ACHN (cell line): ENCODE measurements at regions of chr5 and their contacts with region 1.

Region 1: DNA sequence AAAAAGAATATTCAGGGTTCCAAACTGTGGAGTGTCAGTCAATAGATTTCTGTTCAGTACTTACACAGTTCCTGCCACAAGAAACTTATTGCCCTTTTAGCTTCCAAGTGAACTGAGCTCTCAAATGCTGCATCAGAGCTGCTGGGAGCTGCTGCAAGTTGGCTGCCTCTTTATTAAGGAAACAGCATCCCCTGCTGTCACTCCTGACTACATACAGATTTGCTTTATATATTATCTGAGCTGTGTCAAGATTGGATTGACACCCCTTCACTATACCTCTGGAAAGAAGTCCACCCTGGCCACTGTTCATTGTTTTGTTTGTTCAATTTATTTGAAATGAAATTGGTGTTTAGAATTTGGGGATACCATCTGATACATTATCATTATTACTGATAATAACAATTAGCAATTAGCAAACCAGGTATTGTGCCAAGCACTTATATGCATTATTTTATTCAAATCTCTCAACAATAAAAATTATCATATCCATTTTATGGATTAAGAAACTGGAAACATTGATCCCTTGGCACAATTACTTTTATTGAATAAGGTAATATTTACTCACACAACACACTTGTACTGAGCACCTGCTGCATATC is 16.4 kb upstream of the C5orf58 start:
- DNase-seq: peak; percentile 52

Region 2: GRCh38 chr5:169548315-169548714 is 668.0 kb before region 1 on chr5:
- in situ Hi-C with region 1: no loop called
- DNase-seq: peak; percentile 52

Region 3: DNA sequence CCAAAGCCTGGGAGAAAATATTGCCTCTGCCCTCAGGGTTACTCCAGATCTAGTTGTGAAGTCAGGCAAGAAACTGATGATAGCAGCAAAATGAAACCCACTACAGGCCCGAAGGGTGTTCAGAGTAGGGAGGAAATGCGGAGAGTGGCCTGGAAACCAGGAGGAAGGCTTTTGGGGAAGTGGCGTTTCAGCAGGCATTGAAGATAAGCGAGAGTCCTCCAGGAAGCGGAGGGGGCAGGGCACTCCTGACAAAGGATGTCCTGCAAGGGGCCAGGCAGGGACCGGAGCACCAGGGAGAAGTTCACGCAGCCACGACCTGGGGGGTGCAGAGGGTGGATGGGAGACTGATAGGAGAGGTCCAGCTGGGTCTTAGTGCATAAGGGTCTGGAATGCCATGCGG is 118.4 kb before region 1 on chr5:
- in situ Hi-C with region 1: loop called (anchors 25 kb)
- DNase-seq: no peak

Region 4: DNA sequence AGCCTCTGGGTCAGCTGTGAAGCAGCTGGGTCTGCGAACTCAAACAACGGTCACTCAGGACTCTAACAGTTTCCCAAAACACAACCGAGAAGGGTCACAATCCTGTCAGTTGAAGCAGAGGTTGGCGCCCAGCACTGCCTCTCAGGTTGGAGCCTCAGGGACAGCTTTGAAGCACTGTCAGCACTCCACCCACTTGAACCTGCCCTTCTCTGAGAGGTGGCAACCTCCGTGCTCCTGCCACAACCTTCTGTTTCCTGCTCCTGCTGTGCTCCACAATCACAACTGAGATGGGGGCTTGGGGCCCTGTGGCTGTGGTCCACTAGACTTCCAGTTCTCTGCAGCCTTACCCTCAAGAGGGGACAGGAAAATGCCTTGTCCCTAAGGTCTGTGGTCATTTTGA is 102.9 kb after region 1 on chr5:
- in situ Hi-C with region 1: no loop called
- DNase-seq: no peak